HCT116 (cell line): ENCODE measurements at regions of chr10 and their contacts with region 1.

Region 1: GRCh38 chr10:96513698-96514561 is at the start of gene TLL2:
- DNase-seq: peak; percentile 59
- ATAC-seq: peak; percentile 96
- H3K4me3 ChIP-seq: peak within 1 kb of the TSS; percentile 35 to 58
- H3K27ac ChIP-seq: no peak within 1 kb of the TSS
- H3K4me1 ChIP-seq: peaks cover 0 to 21% of the 10 kb centered on the region in 2 experiments; a peak in 2 of 4 replicates
- H3K27me3 ChIP-seq: no peaks in the 10 kb centered on the region
- CTCF ChIP-seq: peak; percentile 40 to 67 (median 55)
- POLR2A ChIP-seq: no peak
- RAD21 ChIP-seq: peak; percentile 60
- total RNA-seq, gene TLL2: 1.3 TPM

Region 2: DNA sequence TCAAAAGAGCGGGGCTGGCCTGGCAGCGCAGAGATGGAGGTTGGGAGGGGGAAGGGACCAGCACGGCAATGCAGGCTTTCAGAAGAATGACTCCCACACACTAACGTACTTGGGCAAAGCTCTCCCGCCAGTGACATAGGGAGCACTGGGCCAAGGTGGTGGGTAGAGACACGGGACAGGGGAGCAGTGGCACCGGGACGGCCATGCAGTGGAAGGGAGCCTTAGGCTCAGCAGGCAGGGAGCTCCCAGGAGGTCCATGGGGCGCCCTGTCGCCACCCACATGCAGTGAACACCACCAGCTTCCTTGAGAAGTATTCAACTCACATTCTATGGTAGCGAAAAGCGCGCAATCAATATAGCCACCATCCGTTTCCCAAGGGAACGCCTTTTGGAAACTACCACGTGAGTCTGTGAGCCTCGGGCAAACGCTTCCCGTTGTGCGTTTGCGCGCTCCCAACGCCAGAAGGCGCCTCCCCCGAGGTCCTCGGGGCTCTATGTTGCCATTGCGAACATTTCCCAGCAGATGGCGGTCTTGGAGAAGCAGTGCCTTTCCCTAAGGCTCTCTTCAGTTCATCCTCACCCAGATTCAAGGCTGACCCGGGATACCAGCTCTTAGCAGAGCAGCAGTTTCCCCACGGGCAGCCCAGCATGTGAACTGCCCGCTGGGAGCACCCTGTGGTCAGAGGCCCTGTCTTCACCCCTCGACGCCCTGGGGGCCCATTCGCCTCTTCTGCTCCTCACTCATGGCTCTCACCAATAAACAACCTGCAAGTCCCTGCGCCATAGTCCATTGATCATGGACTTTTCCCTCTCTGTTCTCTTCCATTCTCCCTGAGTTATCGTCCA is 138.7 kb before region 1 on chr10:
- CTCF ChIA-PET with region 1: interaction called, 15 read pairs
- POLR2A ChIA-PET with region 1: no interaction called
- RAD21 ChIA-PET with region 1: interaction called, 3 read pairs
- intact Hi-C with region 1: loop called (anchors 1 kb)
- DNase-seq: peak; percentile 81
- ATAC-seq: peak; percentile 91
- H3K4me3 ChIP-seq: peak overlapping the region; percentile 27 to 29; a peak in 3 of 4 replicates
- H3K27ac ChIP-seq: no peak overlapping the region; the same call in 1 of the 2 replicates
- H3K4me1 ChIP-seq: peaks cover 0 to 24% of the 10 kb centered on the region in 2 experiments; a peak in 3 of 4 replicates
- H3K27me3 ChIP-seq: no peaks in the 10 kb centered on the region
- CTCF ChIP-seq: peak; percentile 93 to 99 (median 97)
- POLR2A ChIP-seq: no peak
- RAD21 ChIP-seq: peak; percentile 93

Region 3: DNA sequence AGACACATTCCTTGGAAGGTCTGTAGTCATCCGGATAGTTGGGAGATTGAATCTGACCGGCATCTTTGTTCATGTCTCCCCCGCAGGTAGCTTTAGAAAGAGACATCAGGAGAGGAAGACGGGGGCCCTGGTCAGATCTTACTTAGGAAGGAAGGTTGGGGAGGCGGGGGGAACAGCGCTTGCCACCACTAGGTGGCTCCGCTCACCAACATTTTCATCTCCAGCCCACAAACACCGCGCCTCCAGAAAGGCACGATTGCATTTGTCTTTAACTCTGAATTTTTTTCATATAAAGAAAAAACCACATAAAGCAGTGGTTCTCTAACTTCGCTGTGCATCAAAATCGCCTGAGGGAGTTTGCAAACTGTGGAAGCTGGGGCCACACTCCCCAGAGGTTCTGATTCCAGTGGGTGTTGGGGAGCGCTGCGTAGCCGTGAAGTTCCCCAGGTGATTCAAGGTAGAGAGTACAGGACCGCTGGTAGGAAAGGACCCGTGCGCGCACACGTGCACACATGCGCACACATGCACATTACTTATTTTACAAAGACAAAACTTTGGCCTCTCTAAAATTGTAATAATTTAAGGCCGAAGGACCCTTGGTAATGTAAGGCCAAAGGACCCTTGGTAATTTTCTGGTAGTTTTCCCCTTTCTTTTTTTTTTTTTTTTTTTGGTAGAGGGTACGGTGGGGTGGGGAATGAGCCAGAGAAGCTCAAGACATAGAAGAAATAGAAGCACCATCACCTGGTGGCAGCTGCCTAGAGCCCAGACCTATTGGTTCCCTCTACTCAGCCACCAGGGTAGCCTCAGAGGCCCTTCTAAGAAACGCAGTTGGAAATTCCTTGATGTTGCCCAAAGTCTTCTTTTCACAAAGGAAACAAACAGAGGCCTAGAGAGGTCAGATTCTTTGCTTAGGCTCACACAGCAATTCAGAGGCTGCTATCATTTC is 117.7 kb before region 1 on chr10:
- CTCF ChIA-PET with region 1: interaction called, 16 read pairs
- POLR2A ChIA-PET with region 1: no interaction called
- RAD21 ChIA-PET with region 1: interaction called in 1 of 2 experiments, 3 read pairs
- intact Hi-C with region 1: loop called (anchors 1 kb)
- DNase-seq: peak; percentile 21
- ATAC-seq: peak; percentile 96
- H3K4me3 ChIP-seq: no peak overlapping the region
- H3K27ac ChIP-seq: no peak overlapping the region
- H3K4me1 ChIP-seq: no peaks in the 10 kb centered on the region
- H3K27me3 ChIP-seq: peaks cover 26% of the 10 kb centered on the region
- CTCF ChIP-seq: peak; percentile 79 to 96 (median 93)
- POLR2A ChIP-seq: no peak
- RAD21 ChIP-seq: peak; percentile 86

Region 4: DNA sequence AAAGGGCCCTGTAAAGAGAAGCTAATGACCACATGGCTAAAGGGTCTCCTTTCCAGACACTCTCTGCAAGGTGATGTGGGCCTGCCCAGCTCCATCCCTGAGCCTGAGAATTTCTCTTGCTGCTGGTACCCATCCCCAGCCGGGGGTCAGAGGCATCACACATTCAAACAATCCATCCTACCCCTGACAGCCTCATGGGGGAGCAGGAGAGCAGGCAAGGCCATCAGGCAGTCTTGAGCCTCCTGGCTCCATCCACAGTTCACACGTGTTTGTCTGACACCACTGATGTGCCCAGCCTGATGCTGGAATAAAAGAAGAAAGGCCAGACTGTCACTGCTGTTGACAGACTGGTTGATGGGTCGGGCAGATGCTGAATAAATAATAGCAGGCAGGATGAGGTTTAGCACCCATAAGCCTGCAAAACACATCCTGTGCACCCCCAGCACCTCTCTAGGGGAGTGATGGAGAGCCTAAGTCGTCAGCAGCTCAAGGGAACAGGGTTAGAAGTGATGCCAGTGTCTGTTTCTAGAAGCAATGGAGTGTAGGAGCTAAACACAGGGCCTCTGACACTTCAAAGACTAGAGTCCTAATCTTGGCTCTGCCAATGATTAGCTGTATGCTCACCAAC is 43.7 kb before region 1 on chr10:
- CTCF ChIA-PET with region 1: interaction called, 7 read pairs
- POLR2A ChIA-PET with region 1: no interaction called
- RAD21 ChIA-PET with region 1: no interaction called
- intact Hi-C with region 1: loop called (anchors 2 kb)
- DNase-seq: peak; percentile 24
- ATAC-seq: peak; percentile 99
- H3K4me3 ChIP-seq: no peak overlapping the region
- H3K27ac ChIP-seq: no peak overlapping the region
- H3K4me1 ChIP-seq: no peaks in the 10 kb centered on the region
- H3K27me3 ChIP-seq: peaks cover 16% of the 10 kb centered on the region
- CTCF ChIP-seq: peak; percentile 67 to 89 (median 81)
- POLR2A ChIP-seq: no peak
- RAD21 ChIP-seq: peak; percentile 68

Region 5: GRCh38 chr10:96491299-96491698 is 22.6 kb before region 1 on chr10:
- CTCF ChIA-PET with region 1: interaction called, 22 read pairs
- POLR2A ChIA-PET with region 1: no interaction called
- RAD21 ChIA-PET with region 1: no interaction called
- intact Hi-C with region 1: no loop called
- DNase-seq: no peak
- ATAC-seq: no peak
- H3K4me3 ChIP-seq: no peak overlapping the region
- H3K27ac ChIP-seq: no peak overlapping the region
- H3K4me1 ChIP-seq: peaks cover 0 to 10% of the 10 kb centered on the region in 2 experiments; a peak in 2 of 4 replicates
- H3K27me3 ChIP-seq: no peaks in the 10 kb centered on the region
- CTCF ChIP-seq: peak; percentile 45 to 75 (median 52)
- POLR2A ChIP-seq: no peak
- RAD21 ChIP-seq: peak; percentile 78

Region 6: GRCh38 chr10:96501985-96502384 is 11.9 kb before region 1 on chr10:
- CTCF ChIA-PET with region 1: interaction called, 28 read pairs
- POLR2A ChIA-PET with region 1: interaction called, 12 read pairs
- RAD21 ChIA-PET with region 1: no interaction called
- intact Hi-C with region 1: no loop called
- DNase-seq: peak; percentile 79
- ATAC-seq: peak; percentile 96
- H3K4me3 ChIP-seq: no peak overlapping the region
- H3K27ac ChIP-seq: peak overlapping the region; percentile 4; the same call in 1 of the 2 replicates
- H3K4me1 ChIP-seq: peaks cover 8 to 28% of the 10 kb centered on the region in 2 experiments
- H3K27me3 ChIP-seq: no peaks in the 10 kb centered on the region
- CTCF ChIP-seq: no peak
- POLR2A ChIP-seq: no peak
- RAD21 ChIP-seq: no peak

Region 7: DNA sequence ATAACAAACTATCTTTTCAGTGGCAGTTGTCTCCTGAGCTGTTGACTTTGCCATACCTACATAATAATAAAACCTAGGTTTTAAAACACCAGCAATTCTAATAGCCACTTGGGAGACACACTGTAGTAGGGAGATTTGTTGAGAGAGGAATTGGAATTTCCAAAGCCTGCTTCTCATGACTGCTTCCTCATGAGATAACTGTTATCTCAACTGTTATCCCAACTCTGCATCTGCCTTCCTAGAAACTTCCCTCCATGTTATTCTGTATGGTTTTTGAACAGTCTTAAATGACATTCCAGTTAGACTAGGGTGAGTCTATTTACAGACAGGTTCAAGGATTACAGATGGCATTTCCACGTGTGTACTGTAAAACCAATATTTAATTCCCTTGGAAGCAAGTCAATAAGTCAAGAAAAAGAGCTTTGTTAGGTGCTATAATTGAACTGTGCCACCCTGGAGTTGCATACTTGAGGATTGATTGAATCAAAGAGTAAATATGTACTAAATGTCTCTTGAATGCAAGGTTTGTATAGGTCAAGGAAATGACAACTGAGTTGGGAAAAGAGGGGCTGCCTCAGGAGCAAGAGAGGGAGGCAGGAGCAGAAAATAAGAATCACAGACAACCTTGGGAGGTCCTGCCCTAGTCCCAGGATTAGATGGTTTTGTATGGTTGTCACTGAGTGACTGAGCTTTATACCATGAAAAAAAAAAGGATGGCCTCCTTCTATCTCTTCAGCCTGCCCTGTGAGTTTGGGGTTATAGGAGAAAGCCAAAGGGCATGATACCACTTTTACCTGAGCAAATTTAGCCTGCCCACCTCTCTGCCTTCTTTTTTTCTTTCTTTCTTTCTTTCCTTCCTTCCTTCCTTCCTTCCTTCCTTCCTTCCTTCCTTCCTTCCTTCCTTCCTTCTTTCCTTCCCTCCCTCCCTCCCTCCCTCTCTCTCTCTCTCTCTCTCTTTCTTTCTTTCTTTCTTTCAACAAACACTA is 82.8 kb after region 1 on chr10:
- CTCF ChIA-PET with region 1: no interaction called
- POLR2A ChIA-PET with region 1: no interaction called
- RAD21 ChIA-PET with region 1: no interaction called
- intact Hi-C with region 1: no loop called
- DNase-seq: no peak
- ATAC-seq: no peak
- H3K4me3 ChIP-seq: no peak overlapping the region
- H3K27ac ChIP-seq: no peak overlapping the region
- H3K4me1 ChIP-seq: no peaks in the 10 kb centered on the region
- H3K27me3 ChIP-seq: peaks cover 4% of the 10 kb centered on the region; the same call in 1 of the 2 replicates
- CTCF ChIP-seq: no peak
- POLR2A ChIP-seq: no peak
- RAD21 ChIP-seq: no peak

Region 8: DNA sequence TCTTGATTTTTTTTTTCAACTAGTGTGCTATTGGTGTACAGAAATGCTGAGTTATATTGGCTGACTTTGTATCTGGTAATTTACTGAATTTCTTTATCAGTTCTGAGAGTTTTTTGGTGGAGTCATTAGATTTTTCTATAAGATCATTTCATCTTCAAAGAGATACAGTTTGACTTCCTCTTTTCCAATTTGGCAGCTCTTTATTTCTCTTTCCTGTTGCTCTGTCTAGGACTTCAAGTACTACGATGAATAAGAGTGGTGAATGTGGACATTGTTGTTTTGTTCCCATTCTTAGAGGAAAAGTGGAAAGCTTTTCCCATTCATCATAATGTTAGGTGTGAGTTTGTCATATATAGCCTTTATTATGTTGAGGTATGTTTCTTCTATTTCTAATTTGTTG is 1703.9 kb after region 1 on chr10:
- CTCF ChIA-PET with region 1: no interaction called
- POLR2A ChIA-PET with region 1: no interaction called
- RAD21 ChIA-PET with region 1: no interaction called
- intact Hi-C with region 1: no loop called
- DNase-seq: no peak
- ATAC-seq: no peak
- H3K4me3 ChIP-seq: no peak overlapping the region
- H3K27ac ChIP-seq: no peak overlapping the region
- H3K4me1 ChIP-seq: no peaks in the 10 kb centered on the region
- H3K27me3 ChIP-seq: no peaks in the 10 kb centered on the region
- CTCF ChIP-seq: no peak
- POLR2A ChIP-seq: no peak
- RAD21 ChIP-seq: no peak